AG04449 (cell line): ENCODE measurements at regions of chr1 and their contacts with region 1.

Region 1: DNA sequence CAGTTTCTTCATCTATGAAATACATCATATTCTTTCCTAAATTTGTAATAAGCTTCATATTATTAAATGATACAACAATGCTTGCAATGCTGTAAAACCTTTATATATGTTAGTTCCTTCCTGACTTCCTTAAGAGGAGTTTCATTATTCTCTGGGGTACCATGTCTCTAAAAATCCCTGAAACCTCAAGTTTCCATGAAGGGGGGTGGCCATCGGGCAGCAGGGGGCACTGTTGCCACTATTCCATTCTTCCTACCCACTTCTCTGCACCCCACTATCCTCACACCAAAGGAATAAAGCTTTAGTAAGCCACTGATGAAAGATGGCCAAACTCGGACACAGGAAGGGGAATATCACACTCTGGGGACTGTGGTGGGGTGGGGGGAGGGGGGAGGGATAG is 9.0 kb upstream of the DMRTB1 start:
- DNase-seq: no peak
- H3K4me3 ChIP-seq: no peak overlapping the region
- CTCF ChIP-seq: no peak

Region 2: GRCh38 chr1:53462769-53463501 is 12.7 kb after region 1 on chr1:
- CTCF ChIA-PET with region 1: interaction called, 11 read pairs
- POLR2A ChIA-PET with region 1: no interaction called
- DNase-seq: no peak
- H3K4me3 ChIP-seq: no peak overlapping the region
- CTCF ChIP-seq: no peak